Activated naive CD4-positive, alpha-beta T cell treated with anti-CD3 and anti-CD28 coated beads for 36 hours (primary cell): ENCODE measurements at regions of chr7 and their contacts with region 1.

Region 1: DNA sequence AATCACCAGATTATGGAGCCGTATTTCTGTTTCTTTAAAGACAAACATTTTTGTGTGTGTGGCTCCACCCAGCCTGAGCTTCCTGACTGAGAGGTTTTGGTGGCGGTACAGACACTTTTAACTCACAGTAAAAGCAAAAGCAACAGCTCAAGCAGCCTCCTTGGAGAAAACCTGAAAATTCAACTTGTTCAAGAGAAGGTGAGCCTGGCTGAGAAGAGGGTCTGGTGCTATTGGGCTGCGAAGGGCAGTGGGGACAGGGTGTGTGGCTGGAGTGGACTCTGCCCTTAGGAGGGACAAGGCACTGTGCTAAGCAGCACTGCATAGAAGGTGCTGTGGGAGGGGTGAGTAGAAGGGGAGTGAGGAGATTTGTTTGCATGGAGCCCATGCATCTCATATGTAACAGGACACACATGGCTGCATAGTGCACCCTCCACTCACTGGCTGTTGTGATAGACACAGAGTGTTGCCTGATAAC is at the start of gene GIMAP7:
- DNase-seq: peak; percentile 70
- H3K4me3 Mint-ChIP-seq: peak within 1 kb of the TSS; percentile 96
- H3K27ac Mint-ChIP-seq: peak within 1 kb of the TSS; percentile 98
- H3K4me1 Mint-ChIP-seq: peaks cover 49% of the 10 kb centered on the region
- H3K27me3 Mint-ChIP-seq: no peaks in the 10 kb centered on the region
- total RNA-seq, gene GIMAP7: 41.6 TPM

Region 2: GRCh38 chr7:150356265-150356897 is 158.4 kb before region 1 on chr7:
- CTCF ChIA-PET with region 1: no interaction called
- intact Hi-C with region 1: loop called (anchors 5 kb)
- DNase-seq: peak; percentile 28
- H3K4me3 Mint-ChIP-seq: no peak overlapping the region
- H3K27ac Mint-ChIP-seq: no peak overlapping the region
- H3K4me1 Mint-ChIP-seq: peaks cover 40% of the 10 kb centered on the region
- H3K27me3 Mint-ChIP-seq: no peaks in the 10 kb centered on the region

Region 3: DNA sequence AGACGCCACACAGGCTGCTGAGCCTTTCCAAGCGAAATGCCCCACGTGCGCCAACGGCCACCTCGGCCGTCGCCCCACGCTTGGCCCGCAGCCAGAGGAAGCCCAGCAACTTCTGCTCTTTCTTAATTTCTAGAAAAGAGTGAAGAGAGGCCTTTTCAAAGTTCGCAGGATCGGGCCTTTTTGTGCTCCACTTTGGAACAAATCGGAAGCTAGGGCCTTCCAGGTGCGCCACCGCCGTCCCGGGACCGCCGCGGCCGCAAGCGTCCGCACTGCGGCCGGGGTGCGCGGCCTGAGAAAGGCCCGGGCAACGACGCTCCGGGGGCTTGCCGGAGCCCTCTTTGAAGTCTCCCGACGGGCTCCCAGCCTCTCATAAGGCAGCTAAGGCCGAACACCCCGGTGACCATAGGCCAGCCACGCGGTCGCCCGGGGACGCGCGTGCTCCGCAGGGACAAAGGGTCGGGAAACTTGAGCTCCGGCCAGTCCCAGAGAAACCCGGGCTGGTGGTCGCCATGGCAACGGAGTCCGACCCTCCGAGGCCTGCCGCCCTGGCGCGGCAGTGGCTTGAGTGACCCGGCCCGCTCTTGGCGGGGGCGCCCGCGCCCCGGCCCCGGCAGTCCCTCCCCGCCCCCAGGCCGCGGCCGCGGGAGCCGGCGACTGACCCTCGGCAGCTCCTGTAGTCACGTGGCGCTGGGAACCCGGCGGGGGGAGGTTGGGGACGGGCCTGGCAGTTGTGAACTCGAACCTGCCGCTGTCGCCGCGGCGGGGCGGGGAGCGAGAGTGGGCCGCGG is 146.5 kb before region 1 on chr7 and contains the start of gene REPIN1:
- CTCF ChIA-PET with region 1: no interaction called
- intact Hi-C with region 1: loop called (anchors 5 kb)
- DNase-seq: peak; percentile 84
- H3K4me3 Mint-ChIP-seq: peak within 1 kb of the TSS; percentile 94
- H3K27ac Mint-ChIP-seq: peak within 1 kb of the TSS; percentile 95
- H3K4me1 Mint-ChIP-seq: peaks cover 45% of the 10 kb centered on the region
- H3K27me3 Mint-ChIP-seq: no peaks in the 10 kb centered on the region
- total RNA-seq, gene REPIN1: 45.7 to 49.3 TPM

Region 4: GRCh38 chr7:150466477-150466876 is 48.3 kb before region 1 on chr7:
- CTCF ChIA-PET with region 1: no interaction called
- intact Hi-C with region 1: no loop called
- DNase-seq: no peak
- H3K4me3 Mint-ChIP-seq: no peak overlapping the region
- H3K27ac Mint-ChIP-seq: no peak overlapping the region
- H3K4me1 Mint-ChIP-seq: peaks cover 78% of the 10 kb centered on the region
- H3K27me3 Mint-ChIP-seq: no peaks in the 10 kb centered on the region

Region 5: DNA sequence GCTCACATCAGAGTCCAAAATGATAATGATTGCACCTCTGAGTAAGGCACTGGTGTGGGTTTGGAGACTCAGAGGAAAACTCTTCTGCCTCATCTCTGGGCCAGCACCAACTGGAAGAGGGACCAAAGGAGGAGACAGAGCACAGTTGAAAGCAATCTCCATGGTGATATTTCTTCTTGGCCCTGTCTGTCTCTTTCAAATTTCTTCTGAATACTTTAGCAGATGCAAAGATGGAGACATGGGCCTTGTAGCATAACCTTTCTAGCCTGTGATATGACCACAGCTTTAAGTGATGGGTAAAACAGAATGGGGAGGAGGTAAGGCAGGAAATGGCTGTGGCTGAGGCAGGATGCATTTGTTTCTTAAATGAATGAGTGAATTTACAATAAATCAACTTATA is 12.3 kb before region 1 on chr7:
- CTCF ChIA-PET with region 1: interaction called, 6 read pairs
- intact Hi-C with region 1: loop called (anchors 2 kb)
- DNase-seq: peak; percentile 69
- H3K4me3 Mint-ChIP-seq: peak overlapping the region; percentile 41
- H3K27ac Mint-ChIP-seq: peak overlapping the region; percentile 96
- H3K4me1 Mint-ChIP-seq: peaks cover 88% of the 10 kb centered on the region
- H3K27me3 Mint-ChIP-seq: no peaks in the 10 kb centered on the region

Region 6: GRCh38 chr7:150685219-150686029 is 170.6 kb after region 1 on chr7 and contains the start of gene GIMAP2:
- CTCF ChIA-PET with region 1: interaction called, 4 read pairs
- intact Hi-C with region 1: loop called (anchors 5 kb)
- DNase-seq: peak; percentile 56
- H3K4me3 Mint-ChIP-seq: peak within 1 kb of the TSS; percentile 93
- H3K27ac Mint-ChIP-seq: peak within 1 kb of the TSS; percentile 98
- H3K4me1 Mint-ChIP-seq: peaks cover 73% of the 10 kb centered on the region
- H3K27me3 Mint-ChIP-seq: no peaks in the 10 kb centered on the region
- total RNA-seq, gene GIMAP2: 45.0 to 49.5 TPM

Region 7: DNA sequence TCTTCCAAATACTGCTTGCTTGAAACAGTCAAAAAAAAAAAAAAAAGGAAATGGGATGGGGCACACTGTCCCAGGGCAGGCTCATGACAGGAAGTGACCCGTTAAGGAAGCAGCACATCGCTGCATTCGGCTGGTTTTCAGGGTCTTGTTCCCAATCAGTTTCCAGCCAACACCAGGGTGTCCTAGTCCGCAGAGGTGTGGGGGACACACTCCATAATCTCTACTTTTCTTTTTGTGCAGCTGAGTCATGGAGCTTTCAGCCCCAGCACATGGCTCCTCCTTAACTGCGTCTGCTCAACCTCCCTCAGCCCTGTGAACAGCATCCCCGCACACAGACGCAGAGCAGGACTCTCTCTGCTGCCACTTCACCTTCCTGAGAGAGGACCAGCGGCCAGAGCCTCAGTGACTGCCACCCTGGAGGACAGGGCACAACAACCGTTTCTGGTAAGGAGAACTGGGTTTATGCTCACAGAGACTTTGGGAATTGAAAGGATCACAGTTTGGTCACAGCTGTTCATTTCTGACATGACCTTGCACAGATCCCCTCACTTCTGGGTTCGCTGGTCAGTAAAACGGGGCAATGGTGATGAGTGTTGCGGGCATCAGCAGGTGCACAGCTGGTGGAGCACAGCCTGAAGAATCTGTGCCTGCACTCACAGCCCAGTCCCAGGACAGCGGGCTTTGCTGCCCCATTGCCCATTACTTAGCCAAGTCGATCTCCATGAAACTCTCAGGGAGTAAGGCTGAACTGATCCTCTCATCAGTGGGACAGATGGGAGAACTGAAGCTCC is 222.7 kb after region 1 on chr7 and contains the start of gene GIMAP5:
- CTCF ChIA-PET with region 1: interaction called, 6 read pairs
- intact Hi-C with region 1: loop called (anchors 2 kb)
- DNase-seq: peak; percentile 66
- H3K4me3 Mint-ChIP-seq: peak within 1 kb of the TSS; percentile 88
- H3K27ac Mint-ChIP-seq: peak within 1 kb of the TSS; percentile 95
- H3K4me1 Mint-ChIP-seq: peaks cover 72% of the 10 kb centered on the region
- H3K27me3 Mint-ChIP-seq: no peaks in the 10 kb centered on the region
- total RNA-seq, gene GIMAP5: 32.1 to 32.3 TPM